Gastrocnemius medialis (tissue), 4 donors: ENCODE measurements at regions of chr12 and their contacts with region 1.

Region 1: DNA sequence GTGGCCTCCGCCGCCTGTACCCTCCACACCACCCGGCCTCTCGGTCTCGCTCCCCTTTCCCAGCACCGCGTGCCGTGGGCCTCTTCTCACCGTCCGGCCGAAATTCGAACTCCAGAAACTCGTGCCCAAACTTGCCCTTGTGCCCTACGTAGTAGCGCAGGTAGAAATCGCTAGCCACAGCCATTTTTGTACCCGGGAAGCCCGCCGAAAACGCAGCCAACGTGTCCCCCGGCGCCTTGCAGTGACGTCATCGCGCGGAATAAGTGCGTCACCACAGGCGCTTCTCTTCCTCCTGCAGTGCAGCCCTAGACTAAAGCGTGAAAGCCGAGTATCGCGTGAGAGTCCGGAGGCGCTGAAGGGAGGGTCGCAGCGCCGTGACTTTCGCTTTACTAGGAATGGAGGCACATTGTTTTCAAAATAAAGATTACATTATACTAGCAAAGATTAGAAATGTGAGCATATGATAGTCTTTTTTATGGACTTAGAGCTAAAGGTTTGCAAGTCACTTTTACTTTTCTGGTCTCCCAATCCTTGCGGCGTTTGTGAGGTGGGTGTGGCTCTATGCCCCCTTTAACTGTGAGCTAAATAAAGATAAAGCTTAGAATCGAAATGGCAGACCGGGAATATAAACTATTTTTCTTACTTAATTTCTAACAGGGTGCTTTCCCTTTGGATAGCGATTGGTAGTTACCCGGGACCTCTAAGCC is at the start of gene MAGOHB:
- DNase-seq: peak; percentile 82 to 93
- ATAC-seq: peak; percentile 98 to 99
- H3K4me3 ChIP-seq: peak within 1 kb of the TSS; percentile 68 to 89 (median 79)
- H3K27ac ChIP-seq: peak within 1 kb of the TSS; percentile 90 to 91 (median 90)
- H3K4me1 ChIP-seq: peaks cover 12 to 16% of the 10 kb centered on the region in 2 donors
- H3K27me3 ChIP-seq: no peaks in the 10 kb centered on the region
- CTCF ChIP-seq: peak in 2 of 5 experiments; percentile 49 to 52
- POLR2A ChIP-seq: peak; percentile 51 to 82
- total RNA-seq, gene MAGOHB: 0.80 to 6.3 (median 3.8) TPM

Region 2: DNA sequence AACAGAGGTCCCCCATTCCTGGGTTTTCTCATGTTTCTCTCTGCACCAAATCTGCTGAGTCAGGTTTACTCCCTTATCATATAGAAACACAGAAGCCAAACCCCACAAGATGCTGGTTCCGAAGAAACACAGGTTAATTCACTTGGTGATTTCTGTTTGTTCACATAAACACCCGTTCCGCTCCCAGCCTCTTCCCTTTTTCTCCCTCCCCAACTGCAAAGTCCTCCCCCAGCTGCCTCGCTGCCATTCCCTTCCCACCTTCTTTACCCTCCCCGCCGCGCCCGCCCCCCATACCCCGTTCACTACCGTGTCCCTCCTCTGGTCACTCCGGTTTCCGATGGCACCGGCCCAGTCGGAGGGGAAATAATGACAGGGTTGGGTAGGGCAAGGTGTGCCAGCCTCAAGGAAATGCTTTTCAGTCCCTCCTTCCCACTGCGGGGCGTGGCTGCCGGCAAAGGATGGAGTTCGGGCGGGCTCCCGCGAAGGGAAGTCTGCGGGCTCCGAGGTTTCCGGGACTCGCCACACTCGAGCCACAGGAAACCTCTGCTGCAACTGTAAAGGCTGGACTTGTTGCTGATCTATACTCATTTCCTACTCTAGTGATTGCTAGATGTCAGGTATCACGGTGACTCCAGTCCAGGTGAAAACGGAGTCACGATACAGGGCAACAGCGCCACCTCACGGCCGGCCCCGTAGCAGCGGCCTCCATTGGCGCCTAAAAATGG is 60.3 kb after region 1 on chr12 and contains the start of gene STYK1:
- in situ Hi-C with region 1: no loop called
- intact Hi-C with region 1: loop called (anchors 2 kb)
- DNase-seq: no peak
- ATAC-seq: peak in 1 of 2 donors; percentile 57
- H3K4me3 ChIP-seq: peak within 1 kb of the TSS; percentile 50 to 63 (median 52)
- H3K27ac ChIP-seq: no peak within 1 kb of the TSS
- H3K4me1 ChIP-seq: peaks cover 5 to 6% of the 10 kb centered on the region in 2 donors
- H3K27me3 ChIP-seq: peaks cover 18 to 25% (median 24%) of the 10 kb centered on the region in 3 donors
- CTCF ChIP-seq: peak; percentile 48 to 81 (median 77)
- POLR2A ChIP-seq: no peak
- total RNA-seq, gene STYK1: 0.12 TPM in 1 of 4 donors, not detected in the others

Region 3: DNA sequence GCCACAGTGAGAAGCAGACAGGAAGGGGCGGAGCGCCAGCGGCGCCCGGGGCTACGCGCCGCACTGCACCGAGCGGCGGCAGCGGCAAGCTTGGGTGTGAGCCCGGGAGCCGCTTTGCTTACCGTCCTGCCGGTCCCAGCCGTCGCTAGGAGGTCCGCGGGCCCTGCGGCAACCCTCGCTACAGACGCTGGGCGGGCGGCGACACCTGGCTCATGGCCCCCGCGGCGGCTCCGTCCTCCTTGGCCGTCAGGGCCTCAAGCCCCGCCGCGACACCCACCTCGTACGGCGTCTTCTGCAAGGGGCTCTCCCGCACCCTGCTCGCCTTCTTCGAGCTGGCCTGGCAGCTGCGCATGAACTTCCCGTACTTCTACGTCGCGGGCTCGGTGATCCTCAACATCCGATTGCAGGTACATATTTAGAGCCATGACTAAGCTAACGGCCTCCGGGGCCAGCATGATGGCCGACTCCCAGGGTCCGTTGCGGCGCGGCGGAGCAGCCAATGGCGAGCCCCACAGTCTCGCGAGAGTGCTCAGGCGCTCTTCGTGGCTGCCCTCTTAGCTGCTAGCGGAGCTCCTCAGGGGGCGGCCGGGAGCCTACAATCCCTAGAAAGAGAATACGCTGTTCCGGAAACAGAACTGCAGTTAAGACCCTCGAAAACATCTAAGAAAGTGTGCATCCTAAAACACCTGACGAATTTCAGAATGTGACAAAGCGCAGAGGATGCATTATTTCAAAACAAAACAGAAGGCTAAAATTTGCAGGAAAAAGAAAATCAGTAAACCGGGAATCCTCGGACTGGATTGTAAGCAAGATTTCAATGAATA is 557.9 kb after region 1 on chr12 and contains the start of gene SMIM10L1:
- in situ Hi-C with region 1: loop called in 1 of 4 experiments (anchors 25 kb)
- intact Hi-C with region 1: loop called (anchors 1 kb)
- DNase-seq: peak; percentile 89 to 94
- ATAC-seq: peak; percentile 97 to 98
- H3K4me3 ChIP-seq: peak within 1 kb of the TSS; percentile 80 to 90 (median 82)
- H3K27ac ChIP-seq: peak within 1 kb of the TSS; percentile 92 to 97 (median 96)
- H3K4me1 ChIP-seq: peaks cover 34 to 44% of the 10 kb centered on the region in 2 donors
- H3K27me3 ChIP-seq: peaks cover 0 to 2% (median 0%) of the 10 kb centered on the region in 3 donors
- CTCF ChIP-seq: peak in 1 of 5 experiments; percentile 15
- POLR2A ChIP-seq: peak; percentile 75 to 80
- total RNA-seq, gene SMIM10L1: 13.4 to 20.7 (median 16.2) TPM

Region 4: DNA sequence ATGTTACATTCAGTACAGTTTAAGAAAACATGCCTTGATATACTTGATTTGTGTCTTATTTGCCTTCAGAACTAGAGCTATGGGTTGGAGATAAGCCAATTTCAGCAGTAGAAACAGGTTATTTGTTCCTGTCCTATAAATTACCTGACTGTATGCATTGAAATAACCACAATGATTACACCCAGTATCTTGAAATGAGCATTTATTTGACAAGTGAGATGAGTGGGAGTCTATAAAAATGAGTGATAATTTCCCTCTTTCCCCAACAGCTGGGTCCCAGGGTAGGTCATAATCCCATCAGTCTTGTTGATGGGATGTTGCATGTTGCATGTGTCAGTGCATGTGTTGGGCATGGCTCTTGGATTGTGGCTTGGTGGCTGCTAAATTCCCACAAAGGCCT is 569.5 kb after region 1 on chr12:
- in situ Hi-C with region 1: loop called in 1 of 4 experiments (anchors 25 kb)
- intact Hi-C with region 1: no loop called
- DNase-seq: no peak
- ATAC-seq: no peak
- H3K4me3 ChIP-seq: no peak overlapping the region
- H3K27ac ChIP-seq: no peak overlapping the region
- H3K4me1 ChIP-seq: no peaks in the 10 kb centered on the region
- H3K27me3 ChIP-seq: no peaks in the 10 kb centered on the region
- CTCF ChIP-seq: no peak
- POLR2A ChIP-seq: no peak

Region 5: DNA sequence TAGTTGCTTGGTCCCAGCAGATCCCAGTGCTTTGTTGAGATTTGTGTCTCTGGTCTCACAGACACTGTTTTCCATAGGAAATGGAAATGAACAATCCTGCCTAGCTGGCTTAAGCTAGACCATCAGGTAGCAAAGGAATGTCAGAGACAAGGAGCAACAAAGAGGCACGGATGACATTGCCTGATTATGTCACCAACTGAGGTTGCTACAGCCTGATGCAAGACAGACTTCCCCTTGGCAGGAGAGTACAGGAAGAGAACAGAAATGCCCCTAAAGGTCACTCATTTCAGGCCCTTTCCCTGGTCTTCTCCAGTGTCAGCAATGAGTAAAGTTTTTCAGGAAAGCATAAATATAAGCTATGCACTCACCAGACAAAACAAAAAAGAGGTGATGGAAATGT is 783.9 kb after region 1 on chr12:
- in situ Hi-C with region 1: no loop called
- intact Hi-C with region 1: no loop called
- DNase-seq: no peak
- ATAC-seq: no peak
- H3K4me3 ChIP-seq: no peak overlapping the region
- H3K27ac ChIP-seq: no peak overlapping the region
- H3K4me1 ChIP-seq: no peaks in the 10 kb centered on the region
- H3K27me3 ChIP-seq: no peaks in the 10 kb centered on the region
- CTCF ChIP-seq: no peak
- POLR2A ChIP-seq: no peak